Spleen (tissue), 13 donors: ENCODE measurements at regions of chr3 and their contacts with region 1.

Region 1: DNA sequence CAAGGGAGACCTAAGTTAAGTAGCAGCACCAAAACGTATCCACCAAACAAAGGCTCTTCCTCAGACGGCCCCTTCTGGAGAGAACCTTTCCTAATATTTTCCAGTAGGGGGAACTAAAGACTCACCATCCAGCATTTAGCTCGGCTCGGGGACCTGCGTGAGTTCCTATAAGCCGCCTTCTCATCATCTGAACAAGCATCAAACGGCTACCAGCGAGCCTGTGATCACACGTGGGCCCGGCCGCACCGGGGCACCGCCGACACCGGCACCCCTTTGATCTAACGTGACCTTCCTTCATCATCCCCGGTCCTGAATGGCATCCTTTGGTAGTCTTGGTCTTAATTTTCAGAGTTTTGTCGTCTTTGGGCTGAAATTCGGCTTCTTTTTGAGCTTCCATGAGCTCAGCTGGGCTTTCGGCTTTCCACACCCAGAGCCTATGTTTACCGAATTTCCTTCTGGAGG is 1.4 kb upstream of the ROBO2 start:
- DNase-seq: no peak
- H3K4me3 ChIP-seq: peak overlapping the region; percentile 18 to 67 (median 43)
- H3K27ac ChIP-seq: peak overlapping the region in 2 of 8 donors; percentile 41 to 61
- H3K4me1 ChIP-seq: peaks cover 0 to 16% (median 2%) of the 10 kb centered on the region in 6 donors
- H3K27me3 ChIP-seq: peaks cover 0 to 52% (median 13%) of the 10 kb centered on the region in 7 donors
- CTCF ChIP-seq: peak in 9 of 11 experiments; percentile 19 to 67 (median 51)
- POLR2A ChIP-seq: no peak

Region 2: DNA sequence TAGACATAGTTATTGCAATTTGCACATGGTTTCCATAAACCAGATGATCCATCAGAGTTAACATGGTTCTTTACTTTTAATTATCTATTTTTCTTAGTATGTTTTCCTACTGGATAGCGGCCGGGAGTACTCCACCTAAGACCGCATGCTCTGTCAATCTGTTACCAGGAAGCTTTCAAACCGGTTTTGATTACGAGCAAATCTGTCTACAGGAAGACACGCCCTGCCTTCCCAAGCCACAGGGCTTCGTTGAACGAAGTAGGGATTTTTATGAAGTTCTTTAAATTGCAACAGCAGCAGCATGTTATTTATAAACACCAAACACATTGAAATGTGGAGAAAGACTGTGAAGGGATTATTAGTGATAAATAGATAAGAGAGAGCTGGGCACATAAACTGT is 281.9 kb before region 1 on chr3:
- intact Hi-C with region 1: no loop called
- DNase-seq: no peak
- H3K4me3 ChIP-seq: no peak overlapping the region
- H3K27ac ChIP-seq: no peak overlapping the region
- H3K4me1 ChIP-seq: no peaks in the 10 kb centered on the region
- H3K27me3 ChIP-seq: no peaks in the 10 kb centered on the region
- CTCF ChIP-seq: no peak
- POLR2A ChIP-seq: no peak

Region 3: DNA sequence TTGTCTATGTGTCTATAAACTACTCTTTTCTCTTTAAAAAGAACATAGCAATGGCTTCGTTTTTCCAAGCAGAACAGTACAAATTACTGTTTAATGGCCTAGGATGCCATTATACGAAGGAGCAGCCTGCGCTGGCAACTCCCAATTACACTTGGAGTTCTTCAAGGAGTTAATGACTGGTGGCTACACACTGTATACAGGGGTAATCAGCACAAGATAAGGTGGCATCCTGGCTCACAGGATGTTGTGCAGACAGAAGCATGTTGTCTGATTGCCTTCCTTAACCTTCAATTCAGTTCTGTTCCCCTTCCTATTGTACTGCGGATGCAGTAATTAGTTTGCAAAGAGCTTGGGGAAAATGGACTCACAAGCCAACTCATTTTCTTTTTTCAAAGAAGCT is 249.3 kb before region 1 on chr3:
- intact Hi-C with region 1: no loop called
- DNase-seq: no peak
- H3K4me3 ChIP-seq: no peak overlapping the region
- H3K27ac ChIP-seq: no peak overlapping the region
- H3K4me1 ChIP-seq: no peaks in the 10 kb centered on the region
- H3K27me3 ChIP-seq: no peaks in the 10 kb centered on the region
- CTCF ChIP-seq: no peak
- POLR2A ChIP-seq: no peak

Region 4: GRCh38 chr3:77158730-77159581 is 120.5 kb after region 1 on chr3:
- intact Hi-C with region 1: no loop called
- DNase-seq: no peak
- H3K4me3 ChIP-seq: no peak overlapping the region
- H3K27ac ChIP-seq: no peak overlapping the region
- H3K4me1 ChIP-seq: no peaks in the 10 kb centered on the region
- H3K27me3 ChIP-seq: no peaks in the 10 kb centered on the region
- CTCF ChIP-seq: no peak
- POLR2A ChIP-seq: no peak

Region 5: GRCh38 chr3:77254967-77255831 is 216.7 kb after region 1 on chr3:
- intact Hi-C with region 1: loop called (anchors 10 kb)
- DNase-seq: no peak
- H3K4me3 ChIP-seq: no peak overlapping the region
- H3K27ac ChIP-seq: no peak overlapping the region
- H3K4me1 ChIP-seq: no peaks in the 10 kb centered on the region
- H3K27me3 ChIP-seq: no peaks in the 10 kb centered on the region
- CTCF ChIP-seq: peak in 8 of 11 experiments; percentile 27 to 61 (median 46)
- POLR2A ChIP-seq: no peak